ENCODE measurements at regions of chr10 and their contacts with region 1.

Region 1: DNA sequence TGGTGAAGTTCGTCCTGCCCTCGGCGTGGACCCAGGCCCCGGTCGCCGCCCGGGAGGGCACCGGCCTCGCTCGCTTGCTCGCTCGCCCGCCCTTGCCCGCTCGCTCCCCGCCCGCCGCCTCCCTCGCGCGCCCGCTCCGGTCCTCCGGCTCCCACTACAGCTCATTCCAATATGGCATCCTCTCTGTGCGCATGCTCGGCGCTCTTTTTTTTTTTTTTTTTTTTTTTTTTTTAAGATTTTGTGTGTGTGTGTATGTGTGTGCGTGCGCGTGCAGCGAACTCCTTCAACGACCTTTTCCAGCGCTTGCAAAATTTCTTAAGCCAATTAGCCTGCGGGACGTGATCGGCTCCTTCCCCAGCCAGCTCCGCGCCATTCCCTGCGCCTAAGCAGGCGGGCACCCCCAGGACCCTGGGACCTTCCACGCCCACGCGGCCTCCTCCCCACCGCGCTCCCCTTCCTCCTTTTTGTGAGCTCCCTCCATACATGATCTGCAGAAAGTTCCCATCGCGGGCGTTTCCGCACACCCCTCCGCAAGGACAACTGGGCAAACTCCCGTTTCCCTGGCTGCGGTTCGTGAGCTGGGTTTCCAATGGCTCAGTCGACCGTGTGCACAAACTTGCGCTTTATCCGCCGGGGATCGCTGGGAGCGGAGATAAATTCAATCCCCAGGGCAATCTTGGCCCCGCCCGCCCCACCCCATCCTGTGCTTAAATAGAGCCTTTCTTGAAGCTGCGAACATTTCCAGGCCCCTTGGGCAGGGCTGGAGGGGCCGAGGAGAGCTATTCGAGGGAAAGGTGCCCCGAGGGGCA is at the start of gene SFMBT2:
- H3K4me3 Mint-ChIP-seq: peak within 1 kb of the TSS; percentile 85
- H3K27ac Mint-ChIP-seq: peak within 1 kb of the TSS; percentile 87
- H3K4me1 Mint-ChIP-seq: peaks cover 59% of the 10 kb centered on the region
- H3K27me3 Mint-ChIP-seq: peaks cover 61% of the 10 kb centered on the region

Region 2: DNA sequence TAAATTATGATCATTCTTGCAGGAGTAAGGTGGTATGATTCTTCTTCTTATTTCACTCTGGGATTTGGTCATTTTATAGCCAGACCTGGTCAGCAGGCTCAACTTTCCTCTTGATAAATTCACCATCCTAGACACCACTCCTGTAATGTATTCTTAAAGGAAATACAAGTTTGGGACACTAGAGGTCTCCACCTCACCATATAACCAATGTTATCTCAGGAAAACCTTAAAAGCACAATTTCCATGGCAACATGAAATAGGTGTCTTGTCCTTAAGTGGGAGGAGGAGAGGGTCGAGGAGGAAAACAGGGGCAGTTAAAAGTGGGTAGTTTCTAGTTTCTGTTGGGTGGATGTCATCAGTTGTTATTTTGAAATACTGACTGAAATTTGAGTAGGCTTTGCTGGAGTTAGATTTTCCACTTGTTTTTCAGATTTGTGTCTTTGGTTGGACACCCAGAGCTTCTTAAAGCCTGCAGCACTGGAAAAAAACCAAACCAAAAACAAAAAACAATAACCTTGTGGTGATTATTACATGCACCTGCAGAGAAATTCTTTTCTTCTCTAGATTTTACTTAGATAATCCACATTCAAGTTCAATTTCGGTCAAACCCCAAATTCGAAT is 994.1 kb before region 1 on chr10:
- intact Hi-C with region 1: loop called (anchors 10 kb)
- H3K4me3 Mint-ChIP-seq: no peak overlapping the region
- H3K27ac Mint-ChIP-seq: no peak overlapping the region
- H3K4me1 Mint-ChIP-seq: no peaks in the 10 kb centered on the region
- H3K27me3 Mint-ChIP-seq: no peaks in the 10 kb centered on the region

Region 3: GRCh38 chr10:6843481-6843881 is 567.6 kb before region 1 on chr10:
- intact Hi-C with region 1: loop called (anchors 10 kb)
- H3K4me3 Mint-ChIP-seq: no peak overlapping the region
- H3K27ac Mint-ChIP-seq: no peak overlapping the region
- H3K4me1 Mint-ChIP-seq: peaks cover 26% of the 10 kb centered on the region
- H3K27me3 Mint-ChIP-seq: no peaks in the 10 kb centered on the region

Region 4: DNA sequence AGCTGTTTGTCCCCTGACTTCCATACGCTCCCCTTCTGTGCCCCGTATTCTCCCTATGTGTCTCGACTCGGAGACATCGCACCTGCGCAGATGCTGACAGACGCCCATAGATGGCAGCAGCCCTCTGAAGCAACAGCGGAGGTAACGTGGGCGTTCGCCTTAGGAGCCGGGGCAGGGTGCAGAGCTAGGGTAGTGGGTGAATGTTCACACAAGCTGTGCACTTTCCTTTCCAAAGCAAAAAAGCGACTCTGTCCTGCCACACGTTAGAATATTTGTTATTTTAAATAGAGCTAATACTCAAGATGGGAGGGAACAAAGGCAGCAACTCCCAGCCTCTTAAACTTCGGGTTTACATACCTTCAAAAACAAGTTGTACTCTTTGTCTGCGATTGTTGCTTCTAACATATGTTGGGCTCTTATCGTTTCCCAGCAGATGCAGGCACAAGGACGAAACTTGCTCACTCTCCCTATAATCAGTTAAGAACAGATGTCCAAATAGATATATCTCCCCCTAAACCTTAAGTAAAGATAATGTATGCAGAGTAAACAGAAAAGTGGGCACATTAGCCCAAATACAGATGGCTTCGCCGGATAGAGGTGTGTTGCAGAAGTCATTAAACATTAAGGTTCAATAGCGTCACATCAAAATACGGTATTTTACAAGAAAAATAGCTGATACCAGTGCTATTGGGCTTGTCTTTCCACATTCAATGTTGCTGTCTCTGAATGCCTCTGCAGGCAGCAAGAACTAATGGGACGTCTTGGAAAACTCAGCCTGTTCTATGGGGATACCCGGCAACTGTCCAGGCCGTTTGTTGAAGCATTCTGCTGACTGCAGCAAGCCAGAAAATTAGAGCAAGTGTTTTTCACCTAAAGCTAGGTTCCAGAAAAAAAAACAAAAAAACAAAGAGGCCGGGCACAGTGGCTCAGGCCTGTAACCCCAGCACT is 490.7 kb before region 1 on chr10:
- intact Hi-C with region 1: loop called (anchors 2 kb)
- H3K4me3 Mint-ChIP-seq: no peak overlapping the region
- H3K27ac Mint-ChIP-seq: no peak overlapping the region
- H3K4me1 Mint-ChIP-seq: peaks cover 30% of the 10 kb centered on the region
- H3K27me3 Mint-ChIP-seq: peaks cover 4% of the 10 kb centered on the region

Region 5: GRCh38 chr10:7121154-7121810 is 289.8 kb before region 1 on chr10:
- intact Hi-C with region 1: loop called (anchors 2 kb)
- H3K4me3 Mint-ChIP-seq: no peak overlapping the region
- H3K27ac Mint-ChIP-seq: no peak overlapping the region
- H3K4me1 Mint-ChIP-seq: peaks cover 12% of the 10 kb centered on the region
- H3K27me3 Mint-ChIP-seq: peaks cover 2% of the 10 kb centered on the region

Region 6: DNA sequence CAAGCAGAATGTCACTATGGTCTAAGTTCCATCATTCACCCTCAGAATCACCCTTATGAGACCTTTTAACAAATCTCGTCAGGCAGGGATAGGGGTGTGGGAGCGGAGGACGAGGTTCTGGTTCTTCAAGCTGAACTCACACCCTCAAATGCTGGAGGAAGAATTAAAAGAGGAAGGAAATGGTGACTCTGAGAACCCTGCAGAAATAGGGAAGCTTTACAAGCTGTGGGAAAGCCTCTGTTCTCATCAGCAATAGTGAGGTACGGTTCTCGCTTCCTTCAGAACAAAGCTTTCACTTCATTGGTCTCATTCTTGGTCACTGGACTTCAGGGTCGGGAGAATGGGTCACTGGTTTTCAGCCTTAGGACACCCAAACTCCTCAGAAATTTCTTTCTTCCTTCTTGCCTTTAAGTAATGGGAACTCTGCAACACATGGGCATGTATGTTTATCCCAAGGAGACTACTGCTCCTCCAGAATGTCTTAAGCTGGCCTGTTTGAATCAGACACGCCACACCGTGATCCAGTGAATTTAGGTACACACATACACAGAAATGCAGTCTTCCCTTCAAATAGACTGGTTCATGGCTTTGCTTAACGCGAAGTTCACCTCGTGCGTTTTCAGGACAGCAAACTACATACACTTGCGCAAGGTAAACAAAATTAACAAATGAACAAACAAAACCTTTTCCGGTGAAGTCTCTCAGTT is 226.3 kb before region 1 on chr10:
- intact Hi-C with region 1: loop called (anchors 5 kb)
- H3K4me3 Mint-ChIP-seq: peak overlapping the region; percentile 24
- H3K27ac Mint-ChIP-seq: peak overlapping the region; percentile 73
- H3K4me1 Mint-ChIP-seq: peaks cover 64% of the 10 kb centered on the region
- H3K27me3 Mint-ChIP-seq: peaks cover 6% of the 10 kb centered on the region

Region 7: GRCh38 chr10:7260412-7260900 is 150.6 kb before region 1 on chr10:
- intact Hi-C with region 1: loop called (anchors 1 kb)
- H3K4me3 Mint-ChIP-seq: no peak overlapping the region
- H3K27ac Mint-ChIP-seq: peak overlapping the region; percentile 16
- H3K4me1 Mint-ChIP-seq: peaks cover 38% of the 10 kb centered on the region
- H3K27me3 Mint-ChIP-seq: no peaks in the 10 kb centered on the region